Sigmoid colon (tissue), 7 donors: ENCODE measurements at regions of chr10 and their contacts with region 1.

Region 1: DNA sequence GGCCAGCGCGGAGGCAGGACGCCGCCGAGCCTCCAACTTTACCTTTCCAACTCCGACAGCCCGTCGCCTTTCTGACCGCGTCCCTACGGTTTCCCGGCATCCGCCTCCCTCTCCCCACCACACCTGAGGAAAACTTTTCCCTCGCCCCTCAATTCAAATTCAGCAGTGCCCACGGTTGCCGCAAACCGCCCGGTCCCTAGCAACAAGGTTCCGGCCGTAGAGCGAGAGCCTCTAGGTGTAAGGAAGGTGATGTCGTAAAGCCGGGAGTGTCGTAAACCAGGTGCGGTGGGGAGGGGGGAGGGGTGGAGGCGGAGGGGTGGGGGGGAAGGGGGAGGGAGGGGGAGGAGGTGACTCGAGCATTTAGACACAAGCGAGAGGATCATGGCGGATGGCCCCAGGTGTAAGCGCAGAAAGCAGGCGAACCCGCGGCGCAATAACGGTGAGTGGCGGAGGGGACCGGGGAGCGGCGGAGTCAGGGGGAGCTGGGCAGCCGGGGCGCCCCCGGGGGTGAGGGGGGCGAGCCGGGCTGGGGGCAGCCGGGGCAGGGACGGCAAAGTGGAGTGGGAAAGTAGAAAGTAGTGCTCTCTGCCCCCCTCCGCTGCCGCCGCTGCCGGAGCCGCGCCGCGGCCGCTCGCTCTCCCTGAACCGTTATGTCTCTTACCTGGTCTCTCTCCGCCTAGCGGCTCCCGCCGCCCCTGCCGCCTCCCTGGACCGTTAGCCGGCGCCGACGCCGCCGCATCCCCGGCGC is at the start of gene ZEB1:
- DNase-seq: peak; percentile 96
- H3K4me3 ChIP-seq: peak within 1 kb of the TSS; percentile 78 to 98 (median 88)
- H3K27ac ChIP-seq: peak within 1 kb of the TSS; percentile 97 to 99 (median 98)
- H3K4me1 ChIP-seq: peaks cover 0 to 31% (median 26%) of the 10 kb centered on the region in 4 donors
- H3K27me3 ChIP-seq: no peaks in the 10 kb centered on the region
- CTCF ChIP-seq: peak; percentile 30 to 61 (median 45)
- EP300 ChIP-seq: peak in 1 of 4 donors; percentile 7
- POLR2A ChIP-seq: peak in 1 of 2 donors; percentile 14
- total RNA-seq, gene ZEB1: 215 to 255 (median 251) TPM

Region 2: GRCh38 chr10:30727524-30727923 is 591.5 kb before region 1 on chr10:
- intact Hi-C with region 1: loop called (anchors 5 kb)
- DNase-seq: no peak
- H3K4me3 ChIP-seq: no peak overlapping the region
- H3K27ac ChIP-seq: peak overlapping the region in 2 of 4 donors; percentile 59 to 65
- H3K4me1 ChIP-seq: peaks cover 0 to 13% (median 5%) of the 10 kb centered on the region in 4 donors
- H3K27me3 ChIP-seq: no peaks in the 10 kb centered on the region
- CTCF ChIP-seq: no peak
- EP300 ChIP-seq: no peak
- POLR2A ChIP-seq: no peak

Region 3: GRCh38 chr10:31133628-31134302 is 185.3 kb before region 1 on chr10:
- intact Hi-C with region 1: loop called (anchors 1 kb)
- DNase-seq: peak; percentile 92
- H3K4me3 ChIP-seq: peak overlapping the region; percentile 49 to 56 (median 51)
- H3K27ac ChIP-seq: peak overlapping the region; percentile 85 to 90 (median 87)
- H3K4me1 ChIP-seq: peaks cover 0 to 47% (median 33%) of the 10 kb centered on the region in 4 donors
- H3K27me3 ChIP-seq: no peaks in the 10 kb centered on the region
- CTCF ChIP-seq: no peak
- EP300 ChIP-seq: no peak
- POLR2A ChIP-seq: peak; percentile 60 to 75

Region 4: DNA sequence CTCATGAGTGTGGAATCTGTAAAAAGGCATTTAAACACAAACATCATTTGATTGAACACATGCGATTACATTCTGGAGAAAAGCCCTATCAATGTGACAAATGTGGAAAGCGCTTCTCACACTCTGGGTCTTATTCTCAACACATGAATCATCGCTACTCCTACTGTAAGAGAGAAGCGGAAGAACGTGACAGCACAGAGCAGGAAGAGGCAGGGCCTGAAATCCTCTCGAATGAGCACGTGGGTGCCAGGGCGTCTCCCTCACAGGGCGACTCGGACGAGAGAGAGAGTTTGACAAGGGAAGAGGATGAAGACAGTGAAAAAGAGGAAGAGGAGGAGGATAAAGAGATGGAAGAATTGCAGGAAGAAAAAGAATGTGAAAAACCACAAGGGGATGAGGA is 207.7 kb after region 1 on chr10:
- intact Hi-C with region 1: no loop called
- DNase-seq: no peak
- H3K4me3 ChIP-seq: no peak overlapping the region
- H3K27ac ChIP-seq: no peak overlapping the region
- H3K4me1 ChIP-seq: peaks cover 0 to 5% (median 0%) of the 10 kb centered on the region in 4 donors
- H3K27me3 ChIP-seq: no peaks in the 10 kb centered on the region
- CTCF ChIP-seq: no peak
- EP300 ChIP-seq: no peak
- POLR2A ChIP-seq: no peak

Region 5: GRCh38 chr10:31603235-31604087 is 284.4 kb after region 1 on chr10:
- intact Hi-C with region 1: loop called (anchors 5 kb)
- DNase-seq: peak; percentile 98
- H3K4me3 ChIP-seq: peak overlapping the region; percentile 40 to 74 (median 66)
- H3K27ac ChIP-seq: peak overlapping the region; percentile 86 to 93 (median 90)
- H3K4me1 ChIP-seq: peaks cover 0 to 58% (median 38%) of the 10 kb centered on the region in 4 donors
- H3K27me3 ChIP-seq: no peaks in the 10 kb centered on the region
- CTCF ChIP-seq: no peak
- EP300 ChIP-seq: peak in 1 of 4 donors; percentile 68
- POLR2A ChIP-seq: peak; percentile 36 to 74

Region 6: DNA sequence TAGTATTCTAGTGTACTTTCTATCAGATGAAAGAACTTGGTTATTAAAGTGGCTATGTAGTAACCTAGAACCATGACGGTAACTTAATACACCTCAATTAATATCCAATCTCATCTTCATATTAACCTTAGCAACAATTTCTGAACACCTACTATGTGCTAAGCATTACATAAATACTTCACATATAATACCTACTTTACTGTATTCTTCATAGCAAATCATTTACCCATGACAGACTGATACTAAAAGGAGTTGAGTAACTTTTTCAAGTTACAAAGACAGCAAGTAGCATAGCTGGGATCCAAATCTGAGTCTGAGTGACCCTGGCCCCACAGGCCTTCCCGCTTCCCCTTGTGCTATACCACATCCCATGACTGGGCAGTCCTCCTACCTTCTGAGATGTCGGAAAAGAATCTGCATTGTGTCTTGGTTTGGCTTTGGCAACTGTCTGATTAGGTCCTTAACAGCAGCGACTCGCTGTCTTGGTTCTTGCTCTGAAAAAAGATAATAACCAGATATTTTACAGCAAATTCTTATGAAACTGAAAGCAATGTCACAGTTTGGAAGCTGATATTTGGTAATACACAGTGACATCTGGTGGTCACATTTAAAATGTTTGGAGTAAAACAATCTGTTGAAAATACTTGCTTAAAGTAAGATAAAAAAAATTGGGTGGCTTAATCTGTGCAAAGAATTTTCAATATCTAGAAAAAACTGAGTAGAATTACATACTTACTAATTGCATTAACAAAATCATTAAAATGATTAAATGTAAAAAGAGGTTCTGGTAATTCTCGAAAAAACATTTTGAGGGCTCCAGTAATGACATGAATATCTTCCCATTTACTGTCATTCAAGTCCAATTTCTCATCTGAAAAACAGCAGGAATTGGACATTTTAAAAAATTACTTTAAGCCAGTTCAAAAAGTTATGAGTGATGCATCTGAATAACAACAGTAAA is 489.5 kb after region 1 on chr10:
- intact Hi-C with region 1: loop called (anchors 2 kb)
- DNase-seq: peak; percentile 72
- H3K4me3 ChIP-seq: peak overlapping the region; percentile 7 to 37 (median 33)
- H3K27ac ChIP-seq: peak overlapping the region; percentile 50 to 84 (median 79)
- H3K4me1 ChIP-seq: peaks cover 0 to 32% (median 7%) of the 10 kb centered on the region in 4 donors
- H3K27me3 ChIP-seq: no peaks in the 10 kb centered on the region
- CTCF ChIP-seq: peak; percentile 43 to 57 (median 44)
- EP300 ChIP-seq: no peak
- POLR2A ChIP-seq: no peak